GM12878 (cell line): ENCODE measurements at regions of chr14 and their contacts with region 1.

Region 1: GRCh38 chr14:33602396-33602795 is 348.5 kb downstream of the EGLN3 start:
- DNase-seq: no peak
- ATAC-seq: no peak
- H3K4me3 ChIP-seq: no peak overlapping the region
- H3K27ac ChIP-seq: no peak overlapping the region
- H3K4me1 ChIP-seq: no peaks in the 10 kb centered on the region
- H3K27me3 ChIP-seq: no peaks in the 10 kb centered on the region
- CTCF ChIP-seq: no peak
- EP300 ChIP-seq: no peak
- POLR2A ChIP-seq: no peak
- RAD21 ChIP-seq: no peak

Region 2: GRCh38 chr14:33589326-33589725 is 13.1 kb before region 1 on chr14:
- CTCF ChIA-PET with region 1: interaction called, 11 read pairs
- POLR2A ChIA-PET with region 1: interaction called, 12 read pairs
- RAD21 ChIA-PET with region 1: interaction called, 9 read pairs
- SMC1A ChIA-PET with region 1: interaction called, 44 read pairs
- in situ Hi-C with region 1: no loop called
- intact Hi-C with region 1: no loop called
- DNase-seq: no peak
- ATAC-seq: no peak
- H3K4me3 ChIP-seq: no peak overlapping the region
- H3K27ac ChIP-seq: no peak overlapping the region
- H3K4me1 ChIP-seq: no peaks in the 10 kb centered on the region
- H3K27me3 ChIP-seq: no peaks in the 10 kb centered on the region; a peak in 2 of 4 replicates
- CTCF ChIP-seq: no peak
- EP300 ChIP-seq: no peak
- POLR2A ChIP-seq: no peak
- RAD21 ChIP-seq: no peak

Region 3: GRCh38 chr14:33754265-33754664 is 151.9 kb after region 1 on chr14:
- CTCF ChIA-PET with region 1: no interaction called
- POLR2A ChIA-PET with region 1: no interaction called
- RAD21 ChIA-PET with region 1: no interaction called
- SMC1A ChIA-PET with region 1: no interaction called
- in situ Hi-C with region 1: no loop called
- intact Hi-C with region 1: no loop called
- DNase-seq: no peak
- ATAC-seq: no peak
- H3K4me3 ChIP-seq: no peak overlapping the region
- H3K27ac ChIP-seq: no peak overlapping the region
- H3K4me1 ChIP-seq: no peaks in the 10 kb centered on the region
- H3K27me3 ChIP-seq: no peaks in the 10 kb centered on the region
- CTCF ChIP-seq: no peak
- EP300 ChIP-seq: no peak
- POLR2A ChIP-seq: no peak
- RAD21 ChIP-seq: no peak